ENCODE measurements at regions of chr19 and their contacts with region 1.

Region 1: GRCh38 chr19:45717166-45717982 is 13.3 kb downstream of the FBXO46 start:
- DNase-seq: peak; percentile 99
- H3K4me3 ChIP-seq: peak overlapping the region; percentile 45 to 90 (median 49)
- H3K4me3 Mint-ChIP-seq: peak overlapping the region; percentile 93 to 98
- H3K27ac ChIP-seq: peak overlapping the region; percentile 75 to 87
- H3K27ac Mint-ChIP-seq: peak overlapping the region; percentile 90 to 96 (median 93)
- H3K4me1 ChIP-seq: peaks cover 21 to 29% of the 10 kb centered on the region in 2 donors
- H3K4me1 Mint-ChIP-seq: peaks cover 38% of the 10 kb centered on the region
- H3K27me3 ChIP-seq: no peaks in the 10 kb centered on the region
- H3K27me3 Mint-ChIP-seq: peaks cover 0 to 3% (median 3%) of the 10 kb centered on the region in 3 donors
- CTCF ChIP-seq: no peak

Region 2: DNA sequence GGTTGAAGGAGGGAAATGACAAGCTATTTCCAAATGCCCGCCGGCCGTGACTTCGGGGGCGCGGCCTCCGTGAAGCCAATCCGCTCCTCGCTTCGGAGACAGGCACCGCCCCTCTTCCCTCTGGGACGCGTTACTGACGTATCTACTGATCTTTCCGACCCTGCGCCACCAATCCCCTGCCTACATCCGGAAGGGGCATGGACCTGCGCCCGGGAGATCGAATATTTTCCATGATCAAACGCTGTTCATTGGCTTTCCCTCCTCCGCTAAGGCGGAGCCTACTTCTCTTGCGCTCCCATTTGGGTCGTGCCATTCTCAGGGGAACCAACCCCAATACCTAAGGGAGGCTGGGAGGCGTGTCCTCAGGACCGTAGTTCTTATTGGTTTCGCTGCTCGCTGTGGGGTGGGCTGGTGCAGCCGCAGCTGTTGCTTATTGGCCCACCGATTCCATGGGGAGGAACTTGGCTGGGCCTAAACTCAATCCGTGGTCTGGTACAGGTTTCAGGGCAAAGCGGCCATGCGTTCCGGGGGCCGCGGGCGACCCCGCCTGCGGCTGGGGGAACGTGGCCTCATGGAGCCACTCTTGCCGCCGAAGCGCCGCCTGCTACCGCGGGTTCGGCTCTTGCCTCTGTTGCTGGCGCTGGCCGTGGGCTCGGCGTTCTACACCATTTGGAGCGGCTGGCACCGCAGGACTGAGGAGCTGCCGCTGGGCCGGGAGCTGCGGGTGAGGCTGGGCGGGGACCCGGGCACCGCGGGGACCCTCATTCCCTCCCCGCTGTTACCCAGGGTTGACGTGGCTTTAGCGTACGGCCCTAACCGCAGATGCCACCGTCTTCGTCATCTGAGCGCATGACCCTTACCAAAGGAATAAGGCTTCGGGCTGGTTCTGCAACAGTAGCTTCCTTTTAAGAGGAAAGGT is 24.9 kb before region 1 on chr19 and contains the start of gene QPCTL:
- intact Hi-C with region 1: loop called in 1 of 2 experiments (anchors 1 kb)
- DNase-seq: peak; percentile 99
- H3K4me3 ChIP-seq: peak within 1 kb of the TSS; percentile 52 to 90 (median 79)
- H3K4me3 Mint-ChIP-seq: peak within 1 kb of the TSS; percentile 93 to 98
- H3K27ac ChIP-seq: peak within 1 kb of the TSS; percentile 87 to 97
- H3K27ac Mint-ChIP-seq: peak within 1 kb of the TSS; percentile 97 to 100 (median 100)
- H3K4me1 ChIP-seq: peaks cover 18 to 23% of the 10 kb centered on the region in 2 donors
- H3K4me1 Mint-ChIP-seq: peaks cover 23% of the 10 kb centered on the region
- H3K27me3 ChIP-seq: no peaks in the 10 kb centered on the region
- H3K27me3 Mint-ChIP-seq: peaks cover 0 to 6% (median 0%) of the 10 kb centered on the region in 3 donors
- CTCF ChIP-seq: no peak
- polyA plus RNA-seq, gene QPCTL: 0.46 to 3.0 (median 0.90) TPM

Region 3: DNA sequence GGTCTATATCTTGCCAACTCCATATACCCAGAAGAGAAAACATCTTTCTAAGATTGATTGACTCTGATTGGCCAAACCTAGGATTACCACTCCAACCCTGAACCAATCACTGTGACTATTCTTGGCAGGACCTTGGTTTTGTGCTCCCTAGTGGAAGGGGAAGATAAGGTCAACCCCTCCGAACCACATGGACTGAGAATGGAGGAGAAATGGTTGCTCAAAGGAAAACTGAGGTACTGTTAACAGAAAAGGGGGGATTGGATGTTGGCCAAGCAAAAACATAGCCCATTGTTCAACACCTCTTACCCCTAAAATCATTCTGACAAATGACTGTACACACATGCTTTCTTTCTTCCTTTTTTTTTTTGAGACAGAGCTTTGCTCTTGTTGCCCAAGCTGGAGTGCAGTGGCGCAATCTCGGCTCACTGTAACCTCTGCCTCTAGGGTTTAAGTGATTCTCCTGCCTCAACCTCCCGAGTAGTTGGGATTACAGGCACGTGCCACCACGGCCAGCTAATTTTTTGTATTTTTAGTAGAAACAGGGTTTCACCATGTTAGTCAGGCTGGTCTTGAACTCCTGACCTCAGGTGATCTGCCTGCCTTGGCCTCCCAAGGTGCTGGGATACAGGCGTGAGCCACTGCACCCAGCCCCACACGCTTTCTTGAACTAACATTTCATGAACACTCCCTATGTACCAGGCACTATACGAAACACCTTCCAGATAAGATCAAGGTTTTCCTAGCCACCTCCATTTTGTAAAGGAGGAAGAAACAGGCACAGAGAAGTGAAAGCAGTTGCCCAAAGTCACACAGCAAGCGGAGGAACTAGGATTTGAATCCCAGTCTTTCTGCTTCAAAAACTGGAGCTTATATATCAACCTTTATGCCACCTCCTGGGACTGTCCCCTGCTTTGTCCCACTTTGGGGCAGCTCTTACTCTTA is 22.4 kb after region 1 on chr19:
- intact Hi-C with region 1: no loop called
- DNase-seq: peak; percentile 21 to 64 (median 49)
- H3K4me3 ChIP-seq: no peak overlapping the region
- H3K4me3 Mint-ChIP-seq: peak overlapping the region in 1 of 2 donors; percentile 70
- H3K27ac ChIP-seq: peak overlapping the region in 1 of 2 donors; percentile 59
- H3K27ac Mint-ChIP-seq: peak overlapping the region; percentile 43 to 87 (median 82)
- H3K4me1 ChIP-seq: peaks cover 16 to 17% of the 10 kb centered on the region in 2 donors
- H3K4me1 Mint-ChIP-seq: peaks cover 16% of the 10 kb centered on the region
- H3K27me3 ChIP-seq: peaks cover 0 to 6% of the 10 kb centered on the region in 2 donors
- H3K27me3 Mint-ChIP-seq: peaks cover 18 to 29% (median 25%) of the 10 kb centered on the region in 3 donors
- CTCF ChIP-seq: no peak

Region 4: GRCh38 chr19:45763691-45764294 is 46.4 kb after region 1 on chr19:
- intact Hi-C with region 1: no loop called
- DNase-seq: no peak
- H3K4me3 ChIP-seq: no peak overlapping the region
- H3K4me3 Mint-ChIP-seq: no peak overlapping the region
- H3K27ac ChIP-seq: no peak overlapping the region
- H3K27ac Mint-ChIP-seq: no peak overlapping the region
- H3K4me1 ChIP-seq: peaks cover 7 to 13% of the 10 kb centered on the region in 2 donors
- H3K4me1 Mint-ChIP-seq: peaks cover 4% of the 10 kb centered on the region
- H3K27me3 ChIP-seq: peaks cover 19 to 59% of the 10 kb centered on the region in 2 donors
- H3K27me3 Mint-ChIP-seq: peaks cover 57 to 86% (median 67%) of the 10 kb centered on the region in 3 donors
- CTCF ChIP-seq: no peak

Measured in CD14-positive monocyte (primary cell).